ENCODE measurements at regions of chr5 and their contacts with region 1.

Region 1: GRCh38 chr5:112492291-112492690 is 73.2 kb upstream of the EPB41L4A start:
- DNase-seq: peak; percentile 69
- ATAC-seq: peak; percentile 100
- H3K4me3 Mint-ChIP-seq: no peak overlapping the region
- H3K27ac Mint-ChIP-seq: no peak overlapping the region
- H3K4me1 Mint-ChIP-seq: no peaks in the 10 kb centered on the region
- H3K27me3 Mint-ChIP-seq: no peaks in the 10 kb centered on the region
- CTCF ChIP-seq: peak; percentile 42

Region 2: DNA sequence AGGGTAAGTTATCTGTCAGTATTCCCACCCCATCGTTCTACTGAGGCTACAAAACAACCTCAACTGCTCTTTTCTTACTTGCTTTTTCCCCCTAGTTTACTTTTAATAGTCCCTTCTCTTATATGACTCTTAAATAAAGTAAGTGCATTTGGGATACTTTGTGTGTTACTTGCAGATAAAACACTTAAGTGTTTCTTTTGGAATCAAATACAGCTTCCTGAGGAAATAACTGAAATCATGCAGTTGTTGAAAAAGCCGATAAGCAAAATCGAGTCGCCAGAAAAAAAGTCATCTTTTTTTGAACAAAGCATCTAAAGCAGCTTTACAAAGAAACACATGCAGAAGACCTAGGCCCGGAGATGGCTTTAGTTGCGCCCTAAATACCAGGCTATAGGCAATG is 19.7 kb before region 1 on chr5:
- CTCF ChIA-PET with region 1: interaction called, 35 read pairs
- POLR2A ChIA-PET with region 1: no interaction called
- DNase-seq: no peak
- ATAC-seq: no peak
- H3K4me3 Mint-ChIP-seq: no peak overlapping the region
- H3K27ac Mint-ChIP-seq: no peak overlapping the region
- H3K4me1 Mint-ChIP-seq: no peaks in the 10 kb centered on the region
- H3K27me3 Mint-ChIP-seq: no peaks in the 10 kb centered on the region
- CTCF ChIP-seq: no peak

Region 3: DNA sequence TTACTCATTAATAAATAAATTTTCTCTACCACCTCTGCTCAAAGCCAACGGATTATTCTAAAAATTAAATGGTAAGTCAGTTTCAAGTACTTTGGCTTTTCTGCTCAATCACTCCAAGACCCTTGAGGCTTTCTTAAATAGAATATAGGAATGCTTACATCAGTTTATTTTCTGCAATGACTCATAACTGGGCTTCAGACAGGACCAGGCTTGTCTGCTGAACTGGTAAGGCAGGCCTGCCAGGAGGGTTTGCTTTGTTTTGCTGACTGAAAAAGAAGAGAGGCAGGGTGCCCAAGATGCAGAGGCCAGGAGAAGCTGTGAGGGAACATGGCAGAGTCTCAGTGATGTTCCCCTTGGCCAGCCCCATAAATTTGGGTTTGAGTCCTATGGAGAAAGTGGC is 12.9 kb before region 1 on chr5:
- CTCF ChIA-PET with region 1: interaction called, 35 read pairs
- POLR2A ChIA-PET with region 1: no interaction called
- DNase-seq: no peak
- ATAC-seq: no peak
- H3K4me3 Mint-ChIP-seq: no peak overlapping the region
- H3K27ac Mint-ChIP-seq: no peak overlapping the region
- H3K4me1 Mint-ChIP-seq: peaks cover 5% of the 10 kb centered on the region; the same call in 1 of the 2 replicates
- H3K27me3 Mint-ChIP-seq: 0 out of 2 replicates have a peak, but pooled peaks cover 3% of the 10 kb centered on the region
- CTCF ChIP-seq: no peak

Region 4: DNA sequence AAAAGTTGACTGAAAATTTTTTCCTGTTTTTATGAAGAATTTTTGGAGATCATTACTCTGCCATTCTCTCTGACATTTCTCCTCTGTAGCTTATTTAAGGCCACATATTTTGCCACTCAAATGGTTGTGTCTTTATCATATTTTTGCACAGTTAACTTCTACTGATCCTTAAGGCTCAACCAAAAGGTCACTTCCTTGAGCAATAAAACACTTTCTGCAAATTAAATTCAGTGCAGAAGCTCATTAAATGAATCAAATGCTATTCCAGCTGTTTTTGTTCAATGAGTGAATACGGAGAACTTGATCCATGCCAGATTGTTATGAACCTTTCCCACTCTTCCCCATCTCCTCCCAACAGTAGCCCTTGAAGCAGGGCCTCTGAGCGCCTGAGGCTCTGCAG is 20.6 kb after region 1 on chr5:
- CTCF ChIA-PET with region 1: no interaction called
- POLR2A ChIA-PET with region 1: no interaction called
- DNase-seq: no peak
- ATAC-seq: no peak
- H3K4me3 Mint-ChIP-seq: no peak overlapping the region
- H3K27ac Mint-ChIP-seq: no peak overlapping the region
- H3K4me1 Mint-ChIP-seq: no peaks in the 10 kb centered on the region
- H3K27me3 Mint-ChIP-seq: no peaks in the 10 kb centered on the region; the same call in 1 of the 2 replicates
- CTCF ChIP-seq: no peak

Region 5: DNA sequence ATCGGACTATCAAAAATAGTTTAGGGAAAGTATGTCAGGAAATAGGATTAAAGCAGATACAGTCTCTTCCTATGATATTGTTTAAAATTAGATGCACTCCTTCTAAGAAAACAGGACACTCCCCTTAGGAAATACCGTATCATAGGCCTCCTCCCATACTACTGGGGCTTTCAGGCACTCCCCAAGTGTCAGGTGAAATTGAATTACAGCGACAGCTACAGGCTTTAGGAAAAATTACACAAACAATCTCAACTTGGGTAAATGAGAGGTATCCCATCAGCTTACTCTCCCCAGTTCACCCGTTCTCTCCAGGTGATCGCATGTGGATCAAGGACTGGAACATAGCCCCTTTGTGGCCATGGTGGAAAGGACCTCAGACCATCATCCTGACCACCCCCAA is 37.2 kb after region 1 on chr5:
- CTCF ChIA-PET with region 1: interaction called, 25 read pairs
- POLR2A ChIA-PET with region 1: no interaction called
- DNase-seq: no peak
- ATAC-seq: peak; percentile 77
- H3K4me3 Mint-ChIP-seq: no peak overlapping the region
- H3K27ac Mint-ChIP-seq: no peak overlapping the region
- H3K4me1 Mint-ChIP-seq: peaks cover 32% of the 10 kb centered on the region
- H3K27me3 Mint-ChIP-seq: 0 out of 2 replicates have a peak, but pooled peaks cover 6% of the 10 kb centered on the region
- CTCF ChIP-seq: peak; percentile 13; the same call in 1 of the 2 replicates

Region 6: GRCh38 chr5:112574536-112574935 is 82.2 kb after region 1 on chr5:
- CTCF ChIA-PET with region 1: no interaction called
- POLR2A ChIA-PET with region 1: no interaction called
- DNase-seq: no peak
- ATAC-seq: no peak
- H3K4me3 Mint-ChIP-seq: no peak overlapping the region
- H3K27ac Mint-ChIP-seq: no peak overlapping the region
- H3K4me1 Mint-ChIP-seq: peaks cover 4% of the 10 kb centered on the region; the same call in 1 of the 2 replicates
- H3K27me3 Mint-ChIP-seq: no peaks in the 10 kb centered on the region
- CTCF ChIP-seq: no peak

Region 7: DNA sequence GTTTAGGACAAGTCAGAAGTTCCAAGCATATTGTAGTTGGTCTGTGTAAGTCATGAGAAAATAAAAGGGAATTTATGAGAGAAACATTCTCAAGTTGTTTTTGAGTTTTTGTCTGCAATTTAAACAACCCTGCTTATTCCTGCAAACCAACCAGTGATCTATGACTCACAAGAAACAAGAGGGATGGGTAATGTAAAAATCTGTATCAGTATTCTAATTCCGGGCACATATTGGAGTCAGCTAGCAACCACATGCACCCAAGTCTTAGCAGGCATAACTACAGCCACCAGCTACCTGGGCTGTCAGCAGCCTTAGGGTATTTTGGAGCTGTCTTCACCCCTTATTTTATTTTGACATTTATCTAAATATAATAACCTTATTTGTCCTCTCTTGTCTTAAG is 116.7 kb after region 1 on chr5:
- CTCF ChIA-PET with region 1: interaction called, 15 read pairs
- POLR2A ChIA-PET with region 1: no interaction called
- DNase-seq: no peak
- ATAC-seq: no peak
- H3K4me3 Mint-ChIP-seq: no peak overlapping the region
- H3K27ac Mint-ChIP-seq: no peak overlapping the region
- H3K4me1 Mint-ChIP-seq: peaks cover 20% of the 10 kb centered on the region
- H3K27me3 Mint-ChIP-seq: no peaks in the 10 kb centered on the region
- CTCF ChIP-seq: no peak

Region 8: GRCh38 chr5:112757468-112758208 is 265.3 kb after region 1 on chr5:
- CTCF ChIA-PET with region 1: interaction called, 12 read pairs
- POLR2A ChIA-PET with region 1: no interaction called
- DNase-seq: no peak
- ATAC-seq: peak; percentile 73
- H3K4me3 Mint-ChIP-seq: no peak overlapping the region
- H3K27ac Mint-ChIP-seq: 0 out of 2 replicates have a peak overlapping the region, but pooled peaks have one; percentile 64
- H3K4me1 Mint-ChIP-seq: no peaks in the 10 kb centered on the region
- H3K27me3 Mint-ChIP-seq: no peaks in the 10 kb centered on the region
- CTCF ChIP-seq: peak; percentile 43